ENCODE measurements at regions of chr1 and their contacts with region 1.

Region 1: GRCh38 chr1:112904071-112904830 is 51.7 kb downstream of the SLC16A1 start:
- DNase-seq: peak; percentile 81
- H3K4me3 Mint-ChIP-seq: no peak overlapping the region
- H3K27ac Mint-ChIP-seq: no peak overlapping the region
- H3K4me1 Mint-ChIP-seq: peaks cover 37% of the 10 kb centered on the region
- H3K27me3 Mint-ChIP-seq: no peaks in the 10 kb centered on the region

Region 2: GRCh38 chr1:112935461-112936289 is 31.4 kb after region 1 on chr1:
- CTCF ChIA-PET with region 1: interaction called, 4 read pairs
- intact Hi-C with region 1: loop called (anchors 1 kb)
- DNase-seq: no peak
- H3K4me3 Mint-ChIP-seq: peak overlapping the region; percentile 32
- H3K27ac Mint-ChIP-seq: peak overlapping the region; percentile 83
- H3K4me1 Mint-ChIP-seq: peaks cover 45% of the 10 kb centered on the region
- H3K27me3 Mint-ChIP-seq: no peaks in the 10 kb centered on the region

Region 3: GRCh38 chr1:113042285-113043143 is 138.3 kb after region 1 on chr1:
- CTCF ChIA-PET with region 1: no interaction called
- intact Hi-C with region 1: loop called (anchors 2 kb)
- DNase-seq: peak; percentile 65
- H3K4me3 Mint-ChIP-seq: no peak overlapping the region
- H3K27ac Mint-ChIP-seq: peak overlapping the region; percentile 73
- H3K4me1 Mint-ChIP-seq: peaks cover 26% of the 10 kb centered on the region
- H3K27me3 Mint-ChIP-seq: peaks cover 2% of the 10 kb centered on the region

Measured in activated naive CD4-positive, alpha-beta T cell treated with anti-CD3 and anti-CD28 coated beads for 36 hours (primary cell).